Astrocyte of the cerebellum (primary cell): ENCODE measurements at regions of chr22 and their contacts with region 1.

Region 1: GRCh38 chr22:32218470-32218869 is 13.6 kb upstream of the RFPL2 start:
- DNase-seq: no peak
- H3K4me3 ChIP-seq: no peak overlapping the region
- CTCF ChIP-seq: no peak

Region 2: DNA sequence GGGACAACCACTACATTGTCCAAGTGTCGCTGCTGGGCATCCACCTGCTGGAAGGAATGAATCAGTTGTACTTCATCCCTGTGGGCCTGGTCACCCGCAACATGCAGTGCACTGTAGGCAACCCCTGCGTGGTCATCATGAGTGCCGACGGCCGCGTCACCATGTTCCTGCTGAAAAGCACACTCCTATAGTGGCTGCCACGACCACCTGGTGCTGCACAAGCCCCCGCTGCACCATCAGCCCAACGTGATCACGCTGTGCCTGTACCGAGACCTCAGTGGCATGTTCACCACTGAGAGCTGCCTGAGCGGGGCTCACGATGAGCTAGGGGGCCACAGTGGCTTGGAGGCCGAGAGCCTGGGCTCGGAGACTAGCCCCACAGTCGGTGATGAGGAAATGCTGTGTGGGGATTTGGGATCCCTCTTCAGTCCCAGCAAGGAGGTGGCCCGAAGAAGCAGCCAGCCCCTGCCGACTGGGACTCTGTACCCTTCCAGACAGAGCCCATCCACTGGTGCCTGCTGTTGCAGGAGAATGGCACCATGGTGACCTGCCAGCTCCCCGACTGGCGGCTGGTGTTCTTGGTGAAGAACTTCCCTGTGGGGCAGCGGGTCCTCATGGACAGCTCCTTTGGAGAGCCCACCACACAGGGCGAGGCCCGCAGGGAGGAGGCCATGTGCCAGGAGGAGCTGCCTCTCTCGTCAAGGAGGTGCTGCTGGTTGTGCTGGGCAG is 52.3 kb after region 1 on chr22:
- in situ Hi-C with region 1: loop called (anchors 5 kb)
- DNase-seq: no peak
- H3K4me3 ChIP-seq: no peak overlapping the region
- CTCF ChIP-seq: no peak